Aorta (tissue), 5 donors: ENCODE measurements at regions of chr22 and their contacts with region 1.

Region 1: DNA sequence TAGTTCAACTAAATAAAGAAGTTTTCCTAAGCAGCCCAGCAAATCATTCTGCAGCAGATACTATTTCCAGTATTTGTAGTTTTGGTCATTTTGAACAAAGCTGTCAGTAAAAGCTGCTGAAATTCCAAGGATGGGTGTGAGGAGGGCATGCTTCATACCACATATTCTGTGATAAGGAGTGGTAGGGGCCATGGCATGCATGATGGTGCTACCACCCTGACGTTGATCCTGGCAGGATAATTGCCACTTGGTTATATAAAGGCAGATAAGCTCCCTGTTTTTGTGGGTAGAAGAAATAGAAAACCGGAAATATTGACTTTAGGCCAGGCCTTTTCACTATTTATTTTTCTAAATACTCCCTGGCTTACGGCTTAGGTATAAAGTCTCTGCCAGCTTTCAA is 33.1 kb upstream of the L3MBTL2 start:
- DNase-seq: no peak
- ATAC-seq: no peak
- H3K4me3 ChIP-seq: no peak overlapping the region
- H3K27ac ChIP-seq: peak overlapping the region in 1 of 2 donors; percentile 60
- H3K4me1 ChIP-seq: no peaks in the 10 kb centered on the region
- H3K27me3 ChIP-seq: no peaks in the 10 kb centered on the region

Region 2: GRCh38 chr22:41127451-41127850 is 44.5 kb before region 1 on chr22:
- intact Hi-C with region 1: no loop called
- DNase-seq: peak in 1 of 2 donors; percentile 66
- ATAC-seq: no peak
- H3K4me3 ChIP-seq: no peak overlapping the region
- H3K27ac ChIP-seq: no peak overlapping the region
- H3K4me1 ChIP-seq: no peaks in the 10 kb centered on the region
- H3K27me3 ChIP-seq: no peaks in the 10 kb centered on the region

Region 3: DNA sequence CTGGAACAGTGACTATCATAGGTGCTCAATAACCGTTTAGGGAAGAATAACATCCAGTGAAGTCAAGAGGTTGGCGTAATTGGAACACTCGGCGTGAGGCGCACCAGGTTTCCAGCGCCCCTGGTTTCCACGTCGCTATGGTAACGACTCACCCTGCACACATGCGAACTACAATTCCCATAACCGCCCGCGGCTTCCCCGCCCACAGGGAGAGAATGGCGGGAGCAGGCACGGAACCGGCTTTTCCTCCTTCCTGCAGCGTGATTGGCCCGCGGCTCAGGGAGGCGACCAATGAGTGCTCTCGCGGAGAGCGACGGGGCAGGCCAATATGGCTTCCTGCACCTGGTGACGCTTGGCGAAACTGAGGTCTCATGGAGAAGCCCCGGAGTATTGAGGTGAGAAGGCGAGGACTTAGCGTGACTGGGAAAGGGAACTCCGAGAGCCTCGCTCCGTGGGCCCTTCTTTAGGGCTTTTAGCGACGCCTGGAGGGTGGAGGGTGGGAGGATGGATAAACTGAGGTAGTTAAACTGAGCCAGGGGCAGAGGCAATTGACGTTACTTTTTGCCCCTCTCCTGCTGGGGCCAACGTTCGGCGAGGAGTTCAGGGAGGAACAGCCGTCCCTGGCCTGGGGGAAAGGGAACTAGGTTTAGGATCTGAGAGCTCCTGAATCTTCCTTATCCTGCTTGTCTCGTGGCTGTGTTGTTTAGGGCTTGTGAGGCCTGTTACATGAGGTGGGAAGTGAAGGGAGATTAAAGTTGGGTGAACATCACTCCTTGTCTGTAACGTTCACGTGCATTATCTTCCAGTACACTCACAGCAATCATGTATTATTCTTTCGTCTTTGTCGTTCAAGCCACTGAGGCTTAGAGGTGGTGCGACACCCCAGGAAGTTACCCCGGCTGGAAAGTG is 33.2 kb after region 1 on chr22 and contains the start of gene L3MBTL2:
- intact Hi-C with region 1: loop called in 1 of 2 experiments (anchors 2 kb)
- DNase-seq: peak; percentile 98 to 100
- ATAC-seq: peak; percentile 99
- H3K4me3 ChIP-seq: peak within 1 kb of the TSS; percentile 38 to 48
- H3K27ac ChIP-seq: peak within 1 kb of the TSS in 1 of 2 donors; percentile 43
- H3K4me1 ChIP-seq: no peaks in the 10 kb centered on the region
- H3K27me3 ChIP-seq: no peaks in the 10 kb centered on the region
- total RNA-seq, gene L3MBTL2: 12.3 to 18.5 TPM

Region 4: DNA sequence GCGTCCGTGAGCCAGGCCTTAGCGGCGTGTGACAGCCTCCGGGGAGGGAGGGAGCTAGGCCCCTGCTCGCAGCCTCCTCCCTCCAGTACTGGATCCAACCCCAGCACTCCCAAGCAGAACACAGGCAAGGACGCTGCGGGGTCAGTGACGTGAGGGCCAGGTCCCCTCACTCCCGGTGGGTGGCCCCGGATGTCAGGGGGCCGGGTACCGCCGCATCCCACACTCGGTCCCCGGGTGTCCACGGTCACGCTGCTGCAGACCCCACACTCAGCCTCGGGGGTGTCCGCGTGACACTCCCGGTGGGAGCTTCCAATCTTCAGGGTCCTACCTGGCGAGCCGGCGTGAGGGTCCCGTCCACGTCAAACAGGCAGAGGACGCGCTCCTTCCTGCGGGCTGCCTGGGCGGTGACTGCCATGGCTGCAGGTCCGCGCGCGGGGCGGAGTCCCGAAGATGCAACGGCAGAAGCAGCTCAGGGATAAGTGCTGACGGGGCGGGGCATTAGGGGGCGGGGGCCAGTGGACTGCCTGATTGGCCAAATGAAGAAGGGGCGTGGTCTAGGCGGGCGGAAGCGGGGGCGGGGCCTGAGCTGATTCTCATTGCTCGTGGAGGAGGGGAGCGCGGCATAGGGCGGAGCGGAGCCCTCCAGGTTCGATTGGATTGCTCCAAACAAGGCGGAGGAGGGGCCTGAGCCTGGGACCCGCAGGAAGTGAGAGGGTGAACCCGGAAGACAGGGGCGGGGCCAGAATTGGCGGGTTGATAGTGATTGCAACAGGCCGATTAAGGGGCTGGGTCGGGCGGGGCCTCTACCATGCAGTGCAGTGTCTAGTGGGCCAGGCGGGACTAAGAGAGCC is 417.6 kb after region 1 on chr22 and contains the start of gene PMM1:
- intact Hi-C with region 1: no loop called
- DNase-seq: peak; percentile 100
- ATAC-seq: peak; percentile 100
- H3K4me3 ChIP-seq: peak within 1 kb of the TSS; percentile 48 to 67
- H3K27ac ChIP-seq: peak within 1 kb of the TSS in 1 of 2 donors; percentile 18
- H3K4me1 ChIP-seq: no peaks in the 10 kb centered on the region
- H3K27me3 ChIP-seq: no peaks in the 10 kb centered on the region
- total RNA-seq, gene PMM1: 23.8 to 25.2 TPM